Activated CD8-positive, alpha-beta T cell treated with anti-CD3 and anti-CD28 coated beads, Interleukin-2, amount 10 ng/mL, durations not matched to agents 7 days and 5 days (primary cell): ENCODE measurements at regions of chr11 and their contacts with region 1.

Region 1: GRCh38 chr11:60887556-60887955 is 18.8 kb downstream of the PRPF19 start:
- DNase-seq: peak; percentile 79
- ATAC-seq: peak; percentile 99
- H3K4me3 Mint-ChIP-seq: no peak overlapping the region
- H3K27ac Mint-ChIP-seq: no peak overlapping the region
- H3K4me1 Mint-ChIP-seq: peaks cover 9% of the 10 kb centered on the region
- H3K27me3 Mint-ChIP-seq: no peaks in the 10 kb centered on the region

Region 2: DNA sequence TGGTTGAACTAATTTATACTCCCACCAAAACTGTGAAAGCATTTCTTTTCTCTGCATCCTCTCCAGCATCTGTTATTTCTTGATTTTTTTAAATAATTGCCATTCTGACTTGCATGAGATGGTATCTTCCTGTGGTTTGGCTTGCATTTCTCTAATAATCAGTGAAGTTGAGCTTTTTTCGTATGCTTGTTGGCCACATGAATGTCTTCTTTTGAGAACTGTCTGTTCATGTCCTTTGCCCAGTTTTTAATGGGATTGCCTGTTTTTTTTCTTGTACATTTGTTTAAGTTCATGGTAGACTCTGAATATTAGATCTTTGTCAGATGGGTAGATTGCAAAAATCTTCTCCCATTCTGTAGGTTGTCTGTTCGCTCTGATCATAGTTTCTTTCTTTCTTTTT is 326.3 kb before region 1 on chr11:
- CTCF ChIA-PET with region 1: no interaction called
- POLR2A ChIA-PET with region 1: no interaction called
- DNase-seq: no peak
- ATAC-seq: no peak
- H3K4me3 Mint-ChIP-seq: no peak overlapping the region
- H3K27ac Mint-ChIP-seq: no peak overlapping the region
- H3K4me1 Mint-ChIP-seq: peaks cover 8% of the 10 kb centered on the region
- H3K27me3 Mint-ChIP-seq: no peaks in the 10 kb centered on the region

Region 3: GRCh38 chr11:60775420-60775961 is 112.1 kb before region 1 on chr11:
- CTCF ChIA-PET with region 1: interaction called, 40 read pairs
- POLR2A ChIA-PET with region 1: interaction called, 3 read pairs
- DNase-seq: peak; percentile 90
- ATAC-seq: peak; percentile 92
- H3K4me3 Mint-ChIP-seq: no peak overlapping the region
- H3K27ac Mint-ChIP-seq: no peak overlapping the region
- H3K4me1 Mint-ChIP-seq: peaks cover 7% of the 10 kb centered on the region
- H3K27me3 Mint-ChIP-seq: peaks cover 13% of the 10 kb centered on the region

Region 4: DNA sequence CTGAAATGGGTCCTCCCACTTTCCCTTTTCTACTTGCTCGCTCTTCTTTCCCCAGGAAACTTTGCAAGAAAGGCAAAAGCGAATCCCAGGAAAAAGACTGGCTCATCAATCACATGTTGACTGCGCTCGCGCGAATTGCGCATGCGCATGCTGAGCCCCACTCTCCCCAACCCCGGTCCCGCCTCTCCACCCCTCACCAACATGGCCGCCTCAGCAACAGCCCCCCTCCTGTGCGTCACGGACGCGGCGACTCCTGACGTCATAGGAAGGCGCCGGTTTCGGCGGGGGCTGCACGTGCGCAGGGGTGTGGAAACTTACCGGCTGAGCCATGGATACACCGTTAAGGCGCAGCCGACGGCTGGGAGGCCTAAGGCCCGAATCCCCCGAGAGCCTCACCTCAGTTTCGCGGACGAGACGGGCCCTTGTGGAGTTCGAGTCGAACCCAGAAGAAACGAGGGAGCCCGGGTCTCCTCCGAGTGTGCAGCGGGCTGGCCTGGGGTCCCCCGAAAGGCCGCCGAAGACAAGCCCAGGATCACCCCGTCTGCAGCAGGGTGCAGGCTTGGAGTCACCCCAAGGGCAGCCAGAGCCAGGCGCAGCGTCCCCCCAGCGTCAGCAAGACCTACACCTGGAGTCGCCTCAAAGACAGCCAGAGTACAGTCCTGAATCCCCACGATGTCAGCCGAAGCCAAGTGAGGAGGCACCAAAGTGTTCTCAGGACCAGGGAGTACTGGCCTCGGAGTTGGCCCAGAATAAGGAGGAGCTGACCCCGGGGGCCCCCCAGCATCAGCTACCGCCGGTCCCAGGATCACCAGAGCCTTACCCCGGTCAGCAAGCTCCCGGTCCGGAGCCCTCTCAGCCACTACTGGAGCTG is 45.5 kb before region 1 on chr11 and contains the start of gene CCDC86:
- CTCF ChIA-PET with region 1: interaction called, 610 read pairs
- POLR2A ChIA-PET with region 1: interaction called, 3 read pairs
- DNase-seq: peak; percentile 98
- ATAC-seq: peak; percentile 93
- H3K4me3 Mint-ChIP-seq: peak within 1 kb of the TSS; percentile 90
- H3K27ac Mint-ChIP-seq: peak within 1 kb of the TSS; percentile 92
- H3K4me1 Mint-ChIP-seq: peaks cover 50% of the 10 kb centered on the region
- H3K27me3 Mint-ChIP-seq: no peaks in the 10 kb centered on the region
- total RNA-seq, gene CCDC86: 34.2 to 36.0 TPM

Region 5: DNA sequence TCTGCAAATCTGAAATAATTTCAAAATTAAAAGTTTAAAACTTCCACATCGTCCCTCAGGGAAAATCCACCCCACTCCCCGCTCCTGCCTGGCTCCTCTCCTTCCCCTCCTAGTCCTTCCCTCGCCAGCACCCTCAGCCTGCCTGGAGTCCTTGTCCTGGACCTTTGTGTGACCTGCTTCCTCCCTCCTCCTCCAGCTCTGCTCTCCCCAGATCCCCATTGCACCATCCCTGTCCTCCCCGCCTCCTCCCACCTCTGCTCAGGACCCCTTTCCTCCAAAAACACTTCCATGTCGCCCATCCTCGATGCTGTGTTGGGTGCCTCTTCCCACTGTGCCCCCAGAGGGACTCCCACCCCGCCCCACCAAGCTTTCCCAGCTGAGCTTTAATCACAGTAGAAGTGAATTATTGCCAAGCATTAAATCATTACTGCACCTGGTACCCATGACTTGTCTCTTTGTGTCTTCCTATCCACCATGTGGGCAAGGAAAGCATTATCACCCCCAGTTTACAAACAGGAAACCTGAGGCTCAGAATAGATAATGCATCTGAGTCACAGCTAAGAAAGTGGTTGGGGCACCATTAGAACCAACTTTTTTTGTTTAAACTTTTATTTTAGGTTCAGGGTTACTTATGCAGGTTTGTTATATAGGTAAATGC is 22.6 kb before region 1 on chr11:
- CTCF ChIA-PET with region 1: interaction called, 122 read pairs
- POLR2A ChIA-PET with region 1: interaction called, 3 read pairs
- DNase-seq: no peak
- ATAC-seq: no peak
- H3K4me3 Mint-ChIP-seq: no peak overlapping the region
- H3K27ac Mint-ChIP-seq: peak overlapping the region; percentile 16
- H3K4me1 Mint-ChIP-seq: peaks cover 73% of the 10 kb centered on the region
- H3K27me3 Mint-ChIP-seq: peaks cover 2% of the 10 kb centered on the region

Region 6: GRCh38 chr11:60899046-60899936 is 11.7 kb after region 1 on chr11:
- CTCF ChIA-PET with region 1: interaction called, 61 read pairs
- POLR2A ChIA-PET with region 1: interaction called, 5 read pairs
- DNase-seq: peak; percentile 50
- ATAC-seq: peak; percentile 73
- H3K4me3 Mint-ChIP-seq: no peak overlapping the region
- H3K27ac Mint-ChIP-seq: no peak overlapping the region
- H3K4me1 Mint-ChIP-seq: peaks cover 19% of the 10 kb centered on the region
- H3K27me3 Mint-ChIP-seq: no peaks in the 10 kb centered on the region

Region 7: DNA sequence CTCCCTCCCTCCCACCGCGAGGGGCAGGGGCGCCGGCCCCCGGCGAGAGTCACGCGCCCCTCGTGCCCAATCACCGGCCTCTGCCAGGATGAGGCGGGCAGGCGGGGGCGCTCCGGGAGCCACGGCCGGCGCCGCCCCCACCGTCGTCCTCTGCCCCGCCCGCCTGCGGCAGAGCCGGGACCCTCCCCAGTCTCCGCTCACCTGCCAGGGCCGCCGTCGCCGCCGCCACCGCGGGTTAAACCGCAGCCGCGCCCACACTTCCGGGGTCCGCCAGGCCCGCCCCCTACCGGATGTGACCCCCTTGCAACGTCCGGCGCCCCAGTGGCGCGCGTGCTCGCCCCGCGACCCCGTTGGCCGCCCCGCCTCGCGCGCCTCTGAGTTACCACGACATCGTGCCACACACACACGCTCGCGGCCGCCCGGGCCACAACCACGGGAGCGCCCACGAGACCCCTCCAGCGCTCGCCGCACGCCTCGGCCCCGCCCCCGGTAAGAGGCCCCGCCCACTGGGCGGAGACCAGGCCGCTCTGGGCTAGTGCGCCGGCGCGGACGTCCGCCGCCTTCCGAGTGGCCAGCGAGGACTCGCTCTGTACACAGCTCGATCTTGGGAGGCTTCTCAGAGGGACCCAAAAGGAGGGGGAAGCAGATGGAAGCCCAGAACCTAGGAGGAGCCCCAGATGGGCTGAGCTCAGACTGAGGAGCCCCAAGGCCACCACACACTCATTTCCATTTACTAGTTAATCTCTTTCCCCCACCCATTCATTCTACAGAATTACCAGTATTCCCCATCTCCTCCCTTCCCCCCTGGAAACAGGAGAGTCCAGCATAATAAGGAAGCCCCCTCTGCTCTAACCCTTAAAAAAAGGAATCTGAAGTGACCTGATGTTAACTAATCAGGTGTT is 273.9 kb after region 1 on chr11 and contains the start of gene VPS37C:
- CTCF ChIA-PET with region 1: no interaction called
- POLR2A ChIA-PET with region 1: no interaction called
- DNase-seq: peak; percentile 91
- ATAC-seq: peak; percentile 88
- H3K4me3 Mint-ChIP-seq: peak within 1 kb of the TSS; percentile 83
- H3K27ac Mint-ChIP-seq: peak within 1 kb of the TSS; percentile 93
- H3K4me1 Mint-ChIP-seq: peaks cover 34% of the 10 kb centered on the region
- H3K27me3 Mint-ChIP-seq: no peaks in the 10 kb centered on the region
- total RNA-seq, gene VPS37C: 3.4 to 3.8 TPM